A549 (cell line): ENCODE measurements at regions of chr4 and their contacts with region 1.

Region 1: GRCh38 chr4:153127760-153128494 is 76.3 kb upstream of the TRIM2 start:
- DNase-seq: peak; percentile 46 to 73
- ATAC-seq: peak; percentile 86 to 95
- H3K4me3 ChIP-seq: no peak overlapping the region
- H3K27ac ChIP-seq: peak overlapping the region; percentile 45 to 73
- H3K4me1 ChIP-seq: 0 out of 3 replicates have a peak, but pooled peaks cover 3% of the 10 kb centered on the region
- CTCF ChIP-seq: peak; percentile 80
- EP300 ChIP-seq: no peak
- POLR2A ChIP-seq: no peak
- RAD21 ChIP-seq: peak; percentile 88 to 90

Region 2: DNA sequence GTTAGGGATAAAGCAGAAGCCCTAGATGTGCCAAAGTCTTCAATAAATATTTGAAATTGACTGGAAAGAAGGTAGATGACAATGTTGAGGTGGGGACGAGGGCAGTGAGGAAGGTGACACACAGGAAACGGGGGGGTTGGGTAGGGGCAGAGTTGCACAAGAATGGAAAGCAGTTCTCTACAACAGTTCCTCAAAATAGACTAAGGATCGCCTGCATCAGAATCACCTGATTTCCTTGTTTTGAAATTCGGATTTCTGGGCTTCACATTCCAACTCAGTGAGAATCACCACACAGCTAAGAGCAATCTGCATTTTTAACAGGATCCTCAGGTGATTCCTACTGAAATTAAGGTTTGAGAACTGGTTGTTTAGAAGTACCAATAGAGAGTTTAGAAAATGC is 277.6 kb before region 1 on chr4:
- CTCF ChIA-PET with region 1: interaction called, 34 read pairs
- POLR2A ChIA-PET with region 1: no interaction called
- DNase-seq: no peak
- ATAC-seq: no peak
- H3K4me3 ChIP-seq: no peak overlapping the region
- H3K27ac ChIP-seq: no peak overlapping the region
- H3K4me1 ChIP-seq: peaks cover 5% of the 10 kb centered on the region; the same call in 1 of the 3 replicates
- CTCF ChIP-seq: no peak
- EP300 ChIP-seq: no peak
- POLR2A ChIP-seq: no peak
- RAD21 ChIP-seq: no peak

Region 3: GRCh38 chr4:153083447-153083947 is 44.4 kb before region 1 on chr4:
- CTCF ChIA-PET with region 1: interaction called, 155 read pairs
- POLR2A ChIA-PET with region 1: interaction called, 3 read pairs
- DNase-seq: peak; percentile 74
- ATAC-seq: peak; percentile 85 to 92
- H3K4me3 ChIP-seq: no peak overlapping the region
- H3K27ac ChIP-seq: peak overlapping the region; percentile 49 to 68; a peak in 5 of 6 replicates
- H3K4me1 ChIP-seq: peaks cover 3% of the 10 kb centered on the region; the same call in 1 of the 3 replicates
- CTCF ChIP-seq: peak; percentile 66
- EP300 ChIP-seq: no peak
- POLR2A ChIP-seq: no peak
- RAD21 ChIP-seq: peak; percentile 79 to 81

Region 4: GRCh38 chr4:153099391-153100140 is 28.4 kb before region 1 on chr4:
- CTCF ChIA-PET with region 1: interaction called, 12 read pairs
- POLR2A ChIA-PET with region 1: no interaction called
- DNase-seq: no peak
- ATAC-seq: no peak
- H3K4me3 ChIP-seq: no peak overlapping the region
- H3K27ac ChIP-seq: no peak overlapping the region
- H3K4me1 ChIP-seq: no peaks in the 10 kb centered on the region
- CTCF ChIP-seq: no peak
- EP300 ChIP-seq: no peak
- POLR2A ChIP-seq: no peak
- RAD21 ChIP-seq: no peak

Region 5: DNA sequence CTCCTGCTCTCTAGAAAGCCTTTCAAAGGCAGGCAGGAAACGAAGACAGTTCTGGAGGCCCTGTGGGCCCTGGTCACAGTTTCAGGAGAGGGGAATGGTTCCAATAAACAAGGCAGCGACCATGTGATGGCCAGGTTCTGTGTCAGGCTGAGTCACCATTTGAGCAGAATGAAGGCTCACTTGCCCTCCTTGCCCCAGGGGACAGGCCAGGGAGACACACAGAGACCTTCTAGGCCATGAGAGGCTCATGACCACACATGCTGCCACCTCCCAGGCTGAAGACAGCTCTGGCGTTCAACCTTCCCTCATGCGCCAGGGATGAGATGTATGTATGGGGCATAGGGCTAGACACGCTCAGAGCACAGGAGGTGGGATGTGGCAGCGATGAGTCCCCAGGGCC is 53.4 kb after region 1 on chr4:
- CTCF ChIA-PET with region 1: no interaction called
- POLR2A ChIA-PET with region 1: no interaction called
- DNase-seq: no peak
- ATAC-seq: no peak
- H3K4me3 ChIP-seq: no peak overlapping the region
- H3K27ac ChIP-seq: no peak overlapping the region
- H3K4me1 ChIP-seq: no peaks in the 10 kb centered on the region
- CTCF ChIP-seq: no peak
- EP300 ChIP-seq: no peak
- POLR2A ChIP-seq: no peak
- RAD21 ChIP-seq: no peak